ENCODE measurements at regions of chr6 and their contacts with region 1.

Region 1: GRCh38 chr6:79296225-79296624 is 61.7 kb upstream of the HMGN3 start:
- DNase-seq: no peak

Region 2: GRCh38 chr6:79152269-79152737 is 143.9 kb before region 1 on chr6:
- intact Hi-C with region 1: no loop called
- DNase-seq: no peak

Region 3: DNA sequence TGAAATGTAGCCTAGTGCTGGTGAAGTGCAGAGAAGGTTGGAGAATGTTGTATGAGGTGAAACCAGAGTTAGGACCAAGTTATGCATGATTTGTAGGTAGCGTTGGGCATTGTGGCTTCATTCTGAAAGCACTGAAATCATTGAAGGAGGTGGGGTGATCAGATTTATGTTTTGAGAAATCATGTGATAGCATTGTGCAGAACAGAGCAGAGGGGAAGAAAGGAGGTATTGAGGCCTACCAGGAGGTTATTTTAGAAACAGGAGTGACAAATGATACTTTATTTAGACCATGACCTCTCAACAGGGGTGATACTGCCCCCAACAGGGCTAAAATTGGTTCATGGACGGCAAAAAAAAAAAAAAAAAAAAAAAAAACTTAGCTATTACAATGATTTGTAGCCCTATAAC is 46.1 kb before region 1 on chr6:
- intact Hi-C with region 1: no loop called
- DNase-seq: no peak

Region 4: DNA sequence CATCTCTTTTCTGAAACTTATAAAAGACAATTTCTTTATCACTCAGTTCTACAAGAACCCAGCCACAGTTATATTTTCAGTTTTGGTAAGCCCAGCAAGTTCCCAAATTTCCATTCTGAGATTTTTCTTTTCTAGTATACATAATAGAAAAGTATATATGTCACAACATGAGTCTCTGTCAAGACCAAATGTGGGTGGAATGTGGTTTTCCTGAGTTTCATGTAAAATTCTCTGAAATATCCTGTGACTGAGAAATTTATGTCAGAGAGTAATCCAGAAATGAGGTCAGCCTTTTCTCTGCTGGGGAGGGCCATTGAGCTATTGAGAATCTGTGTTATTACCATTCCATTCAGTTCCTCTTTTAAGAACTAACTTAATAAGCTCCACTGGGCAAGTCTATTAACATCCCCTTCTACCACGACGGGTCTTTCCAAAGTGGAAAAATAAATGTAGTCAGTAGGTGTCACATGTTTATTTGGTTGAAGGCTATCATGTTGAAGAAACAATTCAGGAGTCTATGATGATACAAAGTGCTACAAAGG is 39.0 kb after region 1 on chr6:
- intact Hi-C with region 1: no loop called
- DNase-seq: no peak

Region 5: DNA sequence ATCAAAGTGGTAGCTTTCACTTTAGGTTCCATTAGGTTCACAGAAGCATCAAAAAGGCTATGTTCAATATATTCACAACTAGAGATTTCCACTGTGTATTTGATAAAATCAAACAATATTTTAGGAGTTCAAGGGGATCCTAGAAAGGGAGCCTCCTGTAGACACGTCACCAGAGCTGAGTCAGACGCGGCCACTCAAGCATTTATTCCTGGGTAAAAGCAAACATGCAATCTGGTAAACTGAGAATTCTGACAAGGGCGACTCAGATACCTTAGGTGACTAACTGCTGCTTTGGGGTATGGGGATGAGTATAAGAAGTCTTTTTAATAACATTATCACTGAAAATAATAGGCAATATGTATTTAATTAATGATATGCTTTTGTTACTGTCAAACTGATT is 57.0 kb after region 1 on chr6:
- intact Hi-C with region 1: loop called in 1 of 2 experiments (anchors 2 kb)
- DNase-seq: no peak

Region 6: DNA sequence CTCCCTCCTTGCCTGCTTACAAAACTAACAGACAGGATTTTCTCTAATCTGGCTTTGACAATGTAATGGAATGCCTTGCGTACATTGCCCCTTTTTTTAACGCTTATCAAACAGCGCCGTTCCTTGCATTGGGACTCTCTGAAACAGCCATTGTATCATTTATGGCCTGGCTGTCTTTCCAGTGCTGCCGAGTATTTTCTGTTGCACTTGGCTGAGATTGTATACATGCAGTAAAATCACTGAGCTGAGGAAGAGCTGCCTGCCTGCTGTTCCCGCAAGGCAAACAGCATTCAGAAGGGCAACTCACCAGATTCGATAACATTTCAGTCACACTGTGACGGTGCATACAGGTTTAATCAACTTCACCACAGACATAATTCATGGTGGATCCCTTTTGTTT is 440.9 kb after region 1 on chr6:
- intact Hi-C with region 1: no loop called
- DNase-seq: no peak

Measured in posterior vena cava (tissue), 2 donors.